CD8-positive, alpha-beta memory T cell (primary cell): ENCODE measurements at regions of chr6 and their contacts with region 1.

Region 1: GRCh38 chr6:151390276-151391032 is 905 bp downstream of the ZBTB2 start:
- DNase-seq: peak; percentile 95 to 99 (median 98)
- H3K4me3 ChIP-seq: no peak overlapping the region
- H3K4me3 Mint-ChIP-seq: peak overlapping the region; percentile 73 to 99 (median 82)
- H3K27ac ChIP-seq: peak overlapping the region; percentile 92
- H3K27ac Mint-ChIP-seq: peak overlapping the region; percentile 37 to 98 (median 68)
- H3K4me1 ChIP-seq: peaks cover 68% of the 10 kb centered on the region
- H3K4me1 Mint-ChIP-seq: peaks cover 55 to 73% (median 73%) of the 10 kb centered on the region in 3 donors
- H3K27me3 ChIP-seq: no peaks in the 10 kb centered on the region
- H3K27me3 Mint-ChIP-seq: peaks cover 0 to 4% of the 10 kb centered on the region in 2 donors

Region 2: GRCh38 chr6:151374036-151374683 is 16.3 kb before region 1 on chr6:
- CTCF ChIA-PET with region 1: interaction called, 14 read pairs
- POLR2A ChIA-PET with region 1: interaction called, 54 read pairs
- DNase-seq: peak in 2 of 5 donors; percentile 20 to 30
- H3K4me3 ChIP-seq: peak overlapping the region; percentile 11
- H3K4me3 Mint-ChIP-seq: peak overlapping the region; percentile 74 to 88 (median 87)
- H3K27ac ChIP-seq: peak overlapping the region; percentile 17
- H3K27ac Mint-ChIP-seq: peak overlapping the region; percentile 74 to 97 (median 95)
- H3K4me1 ChIP-seq: peaks cover 64% of the 10 kb centered on the region
- H3K4me1 Mint-ChIP-seq: peaks cover 67 to 78% (median 77%) of the 10 kb centered on the region in 3 donors
- H3K27me3 ChIP-seq: no peaks in the 10 kb centered on the region
- H3K27me3 Mint-ChIP-seq: no peaks in the 10 kb centered on the region

Region 3: GRCh38 chr6:151409260-151409659 is 18.8 kb after region 1 on chr6:
- CTCF ChIA-PET with region 1: interaction called, 9 read pairs
- POLR2A ChIA-PET with region 1: interaction called, 15 read pairs
- DNase-seq: no peak
- H3K4me3 ChIP-seq: no peak overlapping the region
- H3K4me3 Mint-ChIP-seq: no peak overlapping the region
- H3K27ac ChIP-seq: no peak overlapping the region
- H3K27ac Mint-ChIP-seq: peak overlapping the region in 7 of 8 donors; percentile 4 to 86 (median 40)
- H3K4me1 ChIP-seq: peaks cover 13% of the 10 kb centered on the region
- H3K4me1 Mint-ChIP-seq: peaks cover 26 to 47% (median 41%) of the 10 kb centered on the region in 3 donors
- H3K27me3 ChIP-seq: no peaks in the 10 kb centered on the region
- H3K27me3 Mint-ChIP-seq: no peaks in the 10 kb centered on the region

Region 4: DNA sequence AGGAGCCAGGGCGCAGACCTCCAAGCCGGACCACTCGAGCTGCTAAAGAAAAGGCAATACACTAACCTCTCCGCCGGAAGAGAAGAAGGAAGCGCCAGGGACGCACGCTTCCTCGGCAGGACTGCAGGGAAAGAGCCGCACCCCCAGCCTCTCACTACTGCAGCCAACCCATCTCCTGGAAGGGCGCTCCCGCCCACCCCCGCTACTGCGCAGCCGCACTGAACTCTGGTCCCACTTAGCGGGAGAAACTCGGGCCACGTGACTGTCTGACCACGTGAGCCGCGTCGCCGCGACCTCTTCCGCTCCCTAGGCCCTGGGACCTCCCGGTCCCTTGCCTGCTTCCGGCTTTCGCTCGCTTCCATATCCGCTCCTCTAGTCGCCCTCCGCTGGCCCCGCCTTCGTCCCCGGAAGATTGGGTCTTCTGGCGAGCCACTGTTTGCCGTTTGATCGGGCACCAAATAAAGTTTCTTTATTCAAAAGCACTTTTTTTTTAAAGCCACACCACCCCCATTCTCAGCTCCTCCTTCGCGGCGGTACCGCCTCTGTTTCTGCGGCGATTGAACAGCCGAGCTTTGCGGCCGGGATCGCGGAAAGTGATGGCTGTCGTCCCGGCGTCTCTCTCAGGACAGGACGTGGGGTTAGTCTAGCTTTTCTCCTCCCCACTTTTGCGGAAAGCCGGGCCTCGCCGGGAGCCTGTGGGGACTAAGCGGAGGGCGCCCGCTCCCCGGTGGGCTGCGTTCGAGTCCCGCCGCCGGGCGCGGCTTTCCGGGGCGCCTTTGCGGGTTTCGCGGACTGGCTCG is 61.7 kb after region 1 on chr6 and contains the start of gene RMND1:
- CTCF ChIA-PET with region 1: interaction called, 7 read pairs
- POLR2A ChIA-PET with region 1: interaction called, 43 read pairs
- DNase-seq: peak; percentile 98 to 100 (median 99)
- H3K4me3 ChIP-seq: peak within 1 kb of the TSS; percentile 95
- H3K4me3 Mint-ChIP-seq: peak within 1 kb of the TSS; percentile 92 to 99 (median 96)
- H3K27ac ChIP-seq: peak within 1 kb of the TSS; percentile 81
- H3K27ac Mint-ChIP-seq: peak within 1 kb of the TSS; percentile 87 to 95 (median 94)
- H3K4me1 ChIP-seq: peaks cover 24% of the 10 kb centered on the region
- H3K4me1 Mint-ChIP-seq: peaks cover 49 to 77% (median 64%) of the 10 kb centered on the region in 3 donors
- H3K27me3 ChIP-seq: no peaks in the 10 kb centered on the region
- H3K27me3 Mint-ChIP-seq: no peaks in the 10 kb centered on the region
- total RNA-seq, gene RMND1: 24.5 to 25.6 TPM